Caco-2 (cell line): ENCODE measurements at regions of chr15 and their contacts with region 1.

Region 1: DNA sequence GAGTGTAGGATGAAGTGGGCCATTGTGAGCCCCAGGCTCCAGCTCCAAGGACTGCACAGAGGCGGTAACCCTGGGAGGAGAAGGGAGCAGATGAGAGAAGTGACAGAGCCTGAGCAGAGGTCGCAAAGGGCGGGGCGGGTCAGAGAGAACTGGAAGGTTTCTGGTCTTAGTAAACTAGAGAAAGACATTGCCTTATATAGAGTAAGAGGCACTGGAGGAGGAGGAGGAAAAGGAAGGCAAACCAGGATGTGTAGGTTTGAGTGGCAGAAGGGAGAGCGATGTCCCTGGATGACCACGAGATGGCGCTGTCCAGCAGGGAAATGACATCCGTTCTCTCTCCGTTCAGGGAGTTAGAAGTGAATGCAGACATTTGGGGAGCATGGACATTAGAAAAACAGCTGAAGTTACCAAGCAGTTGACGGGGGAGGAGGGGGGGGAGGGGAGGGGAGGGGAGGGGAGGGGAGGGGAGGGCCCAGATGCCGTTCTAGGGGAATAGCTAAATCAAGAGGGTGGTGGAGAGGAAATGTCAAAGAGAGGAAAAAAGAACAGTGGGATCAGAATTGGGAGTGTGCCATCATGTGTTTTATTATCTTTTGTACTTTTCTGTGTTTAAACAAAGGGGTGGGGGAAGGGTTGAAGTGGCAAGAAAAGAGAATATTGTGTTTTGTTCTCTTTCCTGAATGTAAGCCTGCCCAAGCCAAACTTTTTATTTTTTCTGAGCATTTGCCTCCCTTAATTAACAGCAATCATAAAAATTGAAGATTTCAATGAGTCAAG is 48.8 kb downstream of the STARD5 start:
- DNase-seq: peak; percentile 57 to 68
- H3K4me3 ChIP-seq: no peak overlapping the region
- H3K4me3 Mint-ChIP-seq: no peak overlapping the region
- H3K27ac Mint-ChIP-seq: no peak overlapping the region
- H3K4me1 ChIP-seq: no peaks in the 10 kb centered on the region
- H3K4me1 Mint-ChIP-seq: no peaks in the 10 kb centered on the region
- H3K27me3 ChIP-seq: no peaks in the 10 kb centered on the region
- H3K27me3 Mint-ChIP-seq: peaks cover 9% of the 10 kb centered on the region
- CTCF ChIP-seq: peak; percentile 76 to 85

Region 2: GRCh38 chr15:81323944-81324881 is 49.1 kb after region 1 on chr15 and contains the start of gene STARD5:
- CTCF ChIA-PET with region 1: no interaction called
- POLR2A ChIA-PET with region 1: no interaction called
- intact Hi-C with region 1: loop called (anchors 5 kb)
- DNase-seq: peak; percentile 97 to 98
- H3K4me3 ChIP-seq: peak within 1 kb of the TSS; percentile 62
- H3K4me3 Mint-ChIP-seq: peak within 1 kb of the TSS; percentile 90
- H3K27ac Mint-ChIP-seq: peak within 1 kb of the TSS; percentile 48
- H3K4me1 ChIP-seq: peaks cover 15% of the 10 kb centered on the region
- H3K4me1 Mint-ChIP-seq: peaks cover 6% of the 10 kb centered on the region
- H3K27me3 ChIP-seq: no peaks in the 10 kb centered on the region
- H3K27me3 Mint-ChIP-seq: no peaks in the 10 kb centered on the region
- CTCF ChIP-seq: no peak
- total RNA-seq, gene STARD5: 1.0 and 1.3 TPM in 2 replicates

Region 3: DNA sequence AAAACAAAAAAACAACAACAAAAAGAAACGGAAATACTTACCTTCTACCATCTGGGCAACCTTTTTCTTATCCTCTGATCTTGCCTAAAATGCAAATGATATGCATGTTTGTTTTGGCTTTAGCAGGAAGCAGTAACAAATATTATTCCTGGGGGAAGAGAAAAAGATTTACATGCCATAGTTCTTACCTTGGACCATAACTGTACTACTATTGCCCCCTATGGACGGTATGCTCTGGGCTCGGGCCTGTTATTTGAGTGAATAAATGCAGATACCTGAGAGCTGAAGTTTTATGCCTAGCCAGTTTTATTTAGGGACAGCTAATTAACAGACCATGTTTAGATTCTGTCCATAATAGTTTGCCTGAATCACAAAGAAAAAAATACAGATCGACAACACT is 61.4 kb after region 1 on chr15:
- CTCF ChIA-PET with region 1: no interaction called
- POLR2A ChIA-PET with region 1: no interaction called
- intact Hi-C with region 1: loop called (anchors 1 kb)
- DNase-seq: peak in 1 of 2 experiments; percentile 13
- H3K4me3 ChIP-seq: no peak overlapping the region
- H3K4me3 Mint-ChIP-seq: no peak overlapping the region
- H3K27ac Mint-ChIP-seq: no peak overlapping the region
- H3K4me1 ChIP-seq: peaks cover 11% of the 10 kb centered on the region
- H3K4me1 Mint-ChIP-seq: no peaks in the 10 kb centered on the region
- H3K27me3 ChIP-seq: no peaks in the 10 kb centered on the region
- H3K27me3 Mint-ChIP-seq: peaks cover 5% of the 10 kb centered on the region
- CTCF ChIP-seq: no peak

Region 4: GRCh38 chr15:81400640-81401236 is 125.6 kb after region 1 on chr15:
- CTCF ChIA-PET with region 1: interaction called, 9 read pairs
- POLR2A ChIA-PET with region 1: no interaction called
- intact Hi-C with region 1: loop called (anchors 1 kb)
- DNase-seq: peak in 1 of 2 experiments; percentile 41
- H3K4me3 ChIP-seq: no peak overlapping the region
- H3K4me3 Mint-ChIP-seq: no peak overlapping the region
- H3K27ac Mint-ChIP-seq: no peak overlapping the region
- H3K4me1 ChIP-seq: peaks cover 16% of the 10 kb centered on the region
- H3K4me1 Mint-ChIP-seq: peaks cover 6% of the 10 kb centered on the region
- H3K27me3 ChIP-seq: no peaks in the 10 kb centered on the region
- H3K27me3 Mint-ChIP-seq: peaks cover 3% of the 10 kb centered on the region
- CTCF ChIP-seq: peak; percentile 54 to 64

Region 5: GRCh38 chr15:81480645-81481053 is 205.5 kb after region 1 on chr15:
- CTCF ChIA-PET with region 1: no interaction called
- POLR2A ChIA-PET with region 1: no interaction called
- intact Hi-C with region 1: loop called (anchors 1 kb)
- DNase-seq: peak in 1 of 2 experiments; percentile 67
- H3K4me3 ChIP-seq: no peak overlapping the region
- H3K4me3 Mint-ChIP-seq: no peak overlapping the region
- H3K27ac Mint-ChIP-seq: no peak overlapping the region
- H3K4me1 ChIP-seq: no peaks in the 10 kb centered on the region
- H3K4me1 Mint-ChIP-seq: no peaks in the 10 kb centered on the region
- H3K27me3 ChIP-seq: no peaks in the 10 kb centered on the region
- H3K27me3 Mint-ChIP-seq: no peaks in the 10 kb centered on the region
- CTCF ChIP-seq: peak; percentile 54 to 56